PC-9 (cell line): ENCODE measurements at regions of chr20 and their contacts with region 1.

Region 1: GRCh38 chr20:58236612-58237330 is 8.3 kb upstream of the ANKRD60 start:
- DNase-seq: peak; percentile 51 to 75
- H3K4me3 ChIP-seq: peak overlapping the region; percentile 68
- H3K27ac ChIP-seq: no peak overlapping the region
- H3K4me1 ChIP-seq: peaks cover 8% of the 10 kb centered on the region; the same call in 1 of the 2 replicates
- H3K27me3 ChIP-seq: no peaks in the 10 kb centered on the region
- CTCF ChIP-seq: peak; percentile 97

Region 2: DNA sequence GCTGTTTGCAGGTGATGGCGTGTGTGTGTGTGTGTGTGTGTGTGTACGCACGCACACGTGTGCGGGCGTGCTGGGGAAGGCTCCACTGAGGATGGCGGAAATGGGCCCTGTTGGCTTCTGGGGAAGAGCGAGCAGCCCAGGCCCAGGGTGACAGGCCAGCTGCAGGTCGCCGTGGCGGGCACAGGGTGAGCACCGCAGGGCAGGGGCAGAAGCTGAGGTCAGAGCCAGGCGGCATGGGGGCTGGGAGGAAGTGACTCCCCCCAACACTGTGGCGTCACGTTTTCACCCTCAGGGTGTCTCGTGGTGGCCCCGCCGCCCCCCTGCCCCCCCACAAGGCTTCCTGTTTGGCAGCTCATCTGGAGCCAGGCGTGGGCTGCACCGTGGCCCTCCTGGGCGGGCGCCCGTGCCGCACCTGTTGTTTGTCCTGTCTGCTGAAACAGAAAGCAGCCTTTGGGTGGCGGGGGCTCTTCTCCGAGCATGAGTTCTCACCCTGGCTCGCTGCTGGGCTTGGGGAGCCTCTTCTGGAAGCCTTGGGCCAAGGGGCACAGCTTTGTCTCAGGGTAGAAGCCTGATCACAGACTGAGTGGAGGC is 838.4 kb before region 1 on chr20:
- CTCF ChIA-PET with region 1: no interaction called
- POLR2A ChIA-PET with region 1: no interaction called
- intact Hi-C with region 1: no loop called
- DNase-seq: no peak
- H3K4me3 ChIP-seq: no peak overlapping the region
- H3K27ac ChIP-seq: no peak overlapping the region
- H3K4me1 ChIP-seq: no peaks in the 10 kb centered on the region
- H3K27me3 ChIP-seq: no peaks in the 10 kb centered on the region
- CTCF ChIP-seq: no peak

Region 3: DNA sequence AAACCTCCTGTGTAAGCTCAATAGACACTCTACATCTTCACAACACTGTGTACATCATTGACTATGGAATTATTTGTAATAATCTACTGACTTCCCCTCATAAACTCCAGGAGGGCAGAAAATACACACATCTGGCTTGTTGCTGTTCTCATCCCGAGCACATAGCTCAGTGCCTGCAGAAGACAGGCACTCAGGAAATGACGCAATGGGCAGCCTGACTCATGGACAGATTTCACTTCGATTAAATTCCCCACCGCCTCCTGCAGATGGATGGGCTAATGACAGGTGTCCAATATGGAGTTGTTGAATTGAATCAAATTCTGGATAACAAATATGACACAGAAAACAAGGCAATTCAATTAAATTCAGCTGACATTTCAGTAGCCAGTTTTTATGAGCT is 17.5 kb before region 1 on chr20:
- CTCF ChIA-PET with region 1: no interaction called
- POLR2A ChIA-PET with region 1: no interaction called
- intact Hi-C with region 1: no loop called
- DNase-seq: peak; percentile 26 to 75
- H3K4me3 ChIP-seq: peak overlapping the region; percentile 24; the same call in 1 of the 2 replicates
- H3K27ac ChIP-seq: no peak overlapping the region
- H3K4me1 ChIP-seq: 0 out of 2 replicates have a peak, but pooled peaks cover 6% of the 10 kb centered on the region
- H3K27me3 ChIP-seq: no peaks in the 10 kb centered on the region
- CTCF ChIP-seq: peak; percentile 49; the same call in 1 of the 2 replicates

Region 4: DNA sequence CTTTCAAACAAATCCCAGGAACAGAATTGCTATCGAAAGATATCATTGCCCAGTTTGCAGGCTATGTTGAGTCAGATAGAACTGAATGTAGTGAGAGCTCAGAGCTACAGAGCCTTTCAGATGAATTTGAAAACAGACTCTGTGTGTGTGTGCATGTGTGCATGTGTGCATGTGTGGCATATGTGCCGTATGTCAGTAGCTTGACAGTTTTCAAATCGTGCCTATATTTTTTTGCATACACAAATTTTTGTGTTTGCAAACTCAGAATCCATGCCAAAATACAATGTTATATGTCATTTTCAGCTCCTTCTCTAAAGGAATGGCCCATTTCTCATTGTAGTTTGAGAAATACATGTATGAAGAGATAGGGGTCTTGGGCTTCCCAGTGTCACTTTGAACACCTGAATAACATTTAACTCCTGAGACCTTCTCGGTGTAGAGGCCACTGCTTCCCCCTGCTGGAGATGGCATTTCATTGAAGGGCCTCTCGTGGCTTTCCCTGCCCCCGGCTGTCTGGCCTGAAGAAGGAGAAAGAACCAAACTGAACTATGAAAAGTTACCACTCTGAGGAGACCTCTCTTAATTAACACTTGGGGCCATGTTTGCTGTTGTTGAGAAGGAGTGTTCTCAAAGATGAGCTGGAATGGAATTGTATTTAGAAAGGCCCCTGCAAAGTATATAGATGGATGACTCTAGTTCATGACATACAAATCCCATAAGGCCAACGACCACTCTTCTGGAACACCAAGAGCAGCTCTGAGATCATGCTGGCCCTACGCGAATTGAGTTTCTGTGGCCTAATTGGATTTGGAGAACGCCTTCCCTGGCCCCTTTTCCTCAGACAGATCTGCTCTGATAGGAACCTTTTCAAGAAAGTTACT is 211.0 kb after region 1 on chr20:
- CTCF ChIA-PET with region 1: no interaction called
- POLR2A ChIA-PET with region 1: no interaction called
- intact Hi-C with region 1: loop called (anchors 1 kb)
- DNase-seq: peak in 1 of 2 experiments; percentile 56
- H3K4me3 ChIP-seq: no peak overlapping the region
- H3K27ac ChIP-seq: no peak overlapping the region
- H3K4me1 ChIP-seq: no peaks in the 10 kb centered on the region
- H3K27me3 ChIP-seq: no peaks in the 10 kb centered on the region
- CTCF ChIP-seq: peak; percentile 75

Region 5: GRCh38 chr20:58839474-58839874 is 602.7 kb after region 1 on chr20:
- CTCF ChIA-PET with region 1: no interaction called
- POLR2A ChIA-PET with region 1: no interaction called
- intact Hi-C with region 1: loop called (anchors 10 kb)
- DNase-seq: peak in 1 of 2 experiments; percentile 23
- H3K4me3 ChIP-seq: no peak overlapping the region
- H3K27ac ChIP-seq: no peak overlapping the region
- H3K4me1 ChIP-seq: no peaks in the 10 kb centered on the region
- H3K27me3 ChIP-seq: peaks cover 38% of the 10 kb centered on the region
- CTCF ChIP-seq: peak; percentile 54; the same call in 1 of the 2 replicates